OCI-LY7 (cell line): ENCODE measurements at regions of chr12 and their contacts with region 1.

Region 1: DNA sequence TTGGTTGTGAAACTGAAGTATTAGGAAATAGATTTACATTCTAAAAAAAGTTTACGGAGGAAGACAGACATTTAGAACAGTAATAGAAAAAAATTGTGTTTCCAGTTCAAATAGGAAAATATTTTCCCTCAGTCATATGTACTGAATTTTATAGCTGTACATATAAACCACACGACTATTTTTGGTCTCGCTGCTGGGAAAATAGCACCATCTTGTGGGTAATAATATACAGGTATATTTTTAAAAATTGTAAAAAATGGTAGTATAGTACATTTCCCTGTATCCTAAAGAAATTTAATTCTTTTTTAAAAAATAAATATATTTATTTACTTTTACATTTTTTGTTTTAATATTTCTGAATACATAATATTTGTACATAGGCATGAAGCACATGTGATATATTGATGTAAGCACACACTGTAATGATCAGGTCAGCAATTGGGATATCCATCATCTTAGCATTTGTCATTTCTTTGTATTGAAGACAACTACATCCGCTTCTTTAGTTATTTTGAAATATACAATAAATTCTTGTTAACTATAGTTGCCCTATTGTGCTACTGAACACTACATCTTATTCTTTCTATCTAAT is 168.6 kb downstream of the ALX1 start:
- DNase-seq: peak; percentile 33
- H3K4me3 ChIP-seq: no peak overlapping the region
- H3K27ac ChIP-seq: no peak overlapping the region
- H3K4me1 ChIP-seq: no peaks in the 10 kb centered on the region
- CTCF ChIP-seq: peak; percentile 73

Region 2: GRCh38 chr12:85076688-85077430 is 371.8 kb before region 1 on chr12:
- CTCF ChIA-PET with region 1: no interaction called
- POLR2A ChIA-PET with region 1: no interaction called
- intact Hi-C with region 1: loop called (anchors 5 kb)
- DNase-seq: peak; percentile 45
- H3K4me3 ChIP-seq: no peak overlapping the region
- H3K27ac ChIP-seq: no peak overlapping the region
- H3K4me1 ChIP-seq: no peaks in the 10 kb centered on the region
- CTCF ChIP-seq: peak; percentile 80

Region 3: GRCh38 chr12:85309125-85309566 is 139.5 kb before region 1 on chr12:
- CTCF ChIA-PET with region 1: no interaction called
- POLR2A ChIA-PET with region 1: no interaction called
- intact Hi-C with region 1: loop called (anchors 5 kb)
- DNase-seq: no peak
- H3K4me3 ChIP-seq: no peak overlapping the region
- H3K27ac ChIP-seq: no peak overlapping the region
- H3K4me1 ChIP-seq: no peaks in the 10 kb centered on the region
- CTCF ChIP-seq: no peak